CD8-positive, alpha-beta T cell (primary cell): ENCODE measurements at regions of chr9 and their contacts with region 1.

Region 1: GRCh38 chr9:125143375-125144090 is at the start of gene SCAI:
- DNase-seq: peak; percentile 97 to 99 (median 98)
- ATAC-seq: peak; percentile 98
- H3K4me3 ChIP-seq: peak within 1 kb of the TSS; percentile 49 to 51
- H3K4me3 Mint-ChIP-seq: peak within 1 kb of the TSS; percentile 93
- H3K27ac ChIP-seq: no peak within 1 kb of the TSS
- H3K27ac Mint-ChIP-seq: peak within 1 kb of the TSS; percentile 76
- H3K4me1 ChIP-seq: peaks cover 11% of the 10 kb centered on the region
- H3K4me1 Mint-ChIP-seq: peaks cover 26% of the 10 kb centered on the region
- H3K27me3 ChIP-seq: no peaks in the 10 kb centered on the region
- H3K27me3 Mint-ChIP-seq: no peaks in the 10 kb centered on the region
- CTCF ChIP-seq: peak; percentile 92
- total RNA-seq, gene SCAI: 5.7 to 6.3 TPM

Region 2: GRCh38 chr9:124852829-124853531 is 290.6 kb before region 1 on chr9 and contains the start of gene WDR38:
- CTCF ChIA-PET with region 1: interaction called, 4 read pairs
- POLR2A ChIA-PET with region 1: no interaction called
- intact Hi-C with region 1: loop called in 1 of 2 experiments (anchors 2 kb)
- DNase-seq: peak; percentile 64 to 95 (median 80)
- ATAC-seq: peak; percentile 83
- H3K4me3 ChIP-seq: peak within 1 kb of the TSS; percentile 37 to 44
- H3K4me3 Mint-ChIP-seq: peak within 1 kb of the TSS; percentile 65
- H3K27ac ChIP-seq: peak within 1 kb of the TSS in 1 of 2 experiments; percentile 73
- H3K27ac Mint-ChIP-seq: peak within 1 kb of the TSS; percentile 64
- H3K4me1 ChIP-seq: peaks cover 12% of the 10 kb centered on the region
- H3K4me1 Mint-ChIP-seq: peaks cover 9% of the 10 kb centered on the region
- H3K27me3 ChIP-seq: no peaks in the 10 kb centered on the region
- H3K27me3 Mint-ChIP-seq: peaks cover 9% of the 10 kb centered on the region
- CTCF ChIP-seq: peak; percentile 98
- total RNA-seq, gene WDR38: not detected

Region 3: GRCh38 chr9:125024917-125025316 is 118.6 kb before region 1 on chr9:
- CTCF ChIA-PET with region 1: no interaction called
- POLR2A ChIA-PET with region 1: no interaction called
- intact Hi-C with region 1: loop called in 1 of 2 experiments (anchors 10 kb)
- DNase-seq: no peak
- ATAC-seq: no peak
- H3K4me3 ChIP-seq: no peak overlapping the region
- H3K4me3 Mint-ChIP-seq: no peak overlapping the region
- H3K27ac ChIP-seq: no peak overlapping the region
- H3K27ac Mint-ChIP-seq: no peak overlapping the region
- H3K4me1 ChIP-seq: no peaks in the 10 kb centered on the region
- H3K4me1 Mint-ChIP-seq: no peaks in the 10 kb centered on the region
- H3K27me3 ChIP-seq: no peaks in the 10 kb centered on the region
- H3K27me3 Mint-ChIP-seq: no peaks in the 10 kb centered on the region
- CTCF ChIP-seq: no peak

Region 4: DNA sequence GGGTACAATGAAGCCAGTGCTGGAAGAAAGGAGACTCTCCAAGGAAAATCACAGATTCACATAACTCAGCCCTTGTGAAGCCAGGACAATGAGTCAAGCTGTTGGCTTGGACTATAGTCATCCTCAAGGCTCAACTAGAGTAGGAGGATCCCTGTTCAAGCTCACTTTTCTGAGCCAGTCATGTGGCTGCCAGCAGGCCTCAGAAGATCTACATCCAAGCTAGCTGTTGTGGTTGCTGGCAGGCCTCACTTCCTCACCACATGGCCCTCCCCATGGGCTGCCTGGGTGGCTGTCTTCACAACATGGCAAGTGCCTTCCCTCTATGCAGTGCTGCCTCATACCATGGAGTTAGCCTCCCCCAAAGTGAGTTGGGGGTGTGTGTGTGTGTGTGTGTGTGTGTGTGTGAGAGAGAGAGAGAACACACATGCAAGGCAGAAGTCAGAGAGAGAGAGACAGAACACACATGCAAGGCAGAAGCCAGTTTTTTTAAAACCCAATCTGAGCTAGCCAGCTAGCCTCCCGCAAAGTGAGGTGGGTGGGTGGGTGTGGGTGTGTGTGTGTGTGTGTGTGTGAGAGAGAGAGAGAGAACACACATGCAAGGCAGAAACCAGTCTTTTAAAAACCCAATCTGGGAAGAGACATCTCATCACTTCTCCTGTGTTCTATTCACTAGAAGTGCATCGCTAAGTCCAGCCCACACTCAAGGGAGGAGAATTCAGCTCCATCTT is 17.4 kb before region 1 on chr9:
- CTCF ChIA-PET with region 1: interaction called, 20 read pairs
- POLR2A ChIA-PET with region 1: interaction called, 14 read pairs
- intact Hi-C with region 1: loop called in 1 of 2 experiments (anchors 1 kb)
- DNase-seq: peak; percentile 65 to 95 (median 82)
- ATAC-seq: peak; percentile 99
- H3K4me3 ChIP-seq: no peak overlapping the region
- H3K4me3 Mint-ChIP-seq: peak overlapping the region; percentile 61
- H3K27ac ChIP-seq: peak overlapping the region in 1 of 2 experiments; percentile 42
- H3K27ac Mint-ChIP-seq: peak overlapping the region; percentile 91
- H3K4me1 ChIP-seq: peaks cover 23% of the 10 kb centered on the region
- H3K4me1 Mint-ChIP-seq: peaks cover 36% of the 10 kb centered on the region
- H3K27me3 ChIP-seq: no peaks in the 10 kb centered on the region
- H3K27me3 Mint-ChIP-seq: no peaks in the 10 kb centered on the region
- CTCF ChIP-seq: no peak

Region 5: GRCh38 chr9:125241000-125241862 is 97.7 kb after region 1 on chr9 and contains the start of gene HSPA5:
- CTCF ChIA-PET with region 1: no interaction called
- POLR2A ChIA-PET with region 1: no interaction called
- intact Hi-C with region 1: loop called in 1 of 2 experiments (anchors 1 kb)
- DNase-seq: peak; percentile 98 to 100 (median 99)
- ATAC-seq: peak; percentile 90
- H3K4me3 ChIP-seq: peak within 1 kb of the TSS; percentile 91 to 93
- H3K4me3 Mint-ChIP-seq: peak within 1 kb of the TSS; percentile 97
- H3K27ac ChIP-seq: peak within 1 kb of the TSS; percentile 97 to 99
- H3K27ac Mint-ChIP-seq: peak within 1 kb of the TSS; percentile 99
- H3K4me1 ChIP-seq: peaks cover 46% of the 10 kb centered on the region
- H3K4me1 Mint-ChIP-seq: peaks cover 46% of the 10 kb centered on the region
- H3K27me3 ChIP-seq: no peaks in the 10 kb centered on the region
- H3K27me3 Mint-ChIP-seq: no peaks in the 10 kb centered on the region
- CTCF ChIP-seq: no peak
- total RNA-seq, gene HSPA5: 354 to 372 TPM

Region 6: DNA sequence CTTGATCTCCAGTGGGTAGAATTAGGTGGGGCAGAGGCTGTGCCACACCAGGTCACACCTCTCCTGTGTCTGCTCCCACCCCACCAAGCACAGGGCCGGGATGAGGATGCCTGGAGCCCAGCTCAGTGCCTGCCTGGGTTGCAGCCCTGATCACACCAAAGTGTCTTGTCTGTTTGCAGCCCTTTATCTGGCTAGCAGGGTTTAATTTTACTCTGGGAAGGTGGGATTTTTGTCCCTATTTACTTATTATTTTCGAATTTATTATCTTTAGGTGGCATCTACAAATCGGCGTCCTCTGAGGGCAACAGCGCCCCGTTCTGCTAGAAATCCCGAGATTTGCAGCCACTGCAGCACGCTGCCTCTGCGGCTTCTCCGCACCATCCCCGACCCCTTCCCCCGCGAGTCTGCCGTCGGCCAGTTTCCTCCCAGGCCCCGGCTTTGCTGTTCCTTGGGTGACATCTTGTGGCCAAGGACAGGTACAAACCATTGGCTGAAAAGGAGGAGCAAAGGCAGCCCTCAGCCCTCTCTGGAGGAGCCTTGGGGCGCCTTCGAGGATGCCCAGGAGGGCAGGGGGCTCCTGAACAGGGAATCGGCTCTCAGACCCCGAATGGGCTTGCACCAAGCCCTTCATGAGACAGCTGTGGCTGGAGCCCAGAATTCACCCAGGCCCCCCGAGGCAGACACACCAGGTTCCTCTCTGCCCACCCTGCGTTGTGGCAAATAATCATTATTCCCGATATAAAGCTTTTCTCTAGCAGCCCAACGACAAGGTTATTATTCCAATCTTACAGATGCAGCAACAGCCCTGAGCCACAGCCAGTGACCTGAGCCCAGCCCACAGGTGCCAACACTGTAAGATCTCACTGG is 231.1 kb after region 1 on chr9:
- CTCF ChIA-PET with region 1: interaction called, 4 read pairs
- POLR2A ChIA-PET with region 1: no interaction called
- intact Hi-C with region 1: loop called in 1 of 2 experiments (anchors 1 kb)
- DNase-seq: peak; percentile 25 to 77 (median 58)
- ATAC-seq: peak; percentile 96
- H3K4me3 ChIP-seq: no peak overlapping the region
- H3K4me3 Mint-ChIP-seq: peak overlapping the region; percentile 64
- H3K27ac ChIP-seq: no peak overlapping the region
- H3K27ac Mint-ChIP-seq: no peak overlapping the region
- H3K4me1 ChIP-seq: peaks cover 11% of the 10 kb centered on the region
- H3K4me1 Mint-ChIP-seq: peaks cover 10% of the 10 kb centered on the region
- H3K27me3 ChIP-seq: no peaks in the 10 kb centered on the region
- H3K27me3 Mint-ChIP-seq: peaks cover 10% of the 10 kb centered on the region
- CTCF ChIP-seq: peak; percentile 76